Transverse colon (tissue), 4 donors: ENCODE measurements at regions of chr9 and their contacts with region 1.

Region 1: GRCh38 chr9:23784962-23785361 is 41.1 kb downstream of the ELAVL2 start:
- DNase-seq: no peak
- H3K4me3 ChIP-seq: no peak overlapping the region
- H3K27ac ChIP-seq: no peak overlapping the region
- H3K4me1 ChIP-seq: peaks cover 0 to 13% (median 0%) of the 10 kb centered on the region in 4 donors
- H3K27me3 ChIP-seq: no peaks in the 10 kb centered on the region
- CTCF ChIP-seq: no peak
- EP300 ChIP-seq: no peak
- POLR2A ChIP-seq: no peak

Region 2: DNA sequence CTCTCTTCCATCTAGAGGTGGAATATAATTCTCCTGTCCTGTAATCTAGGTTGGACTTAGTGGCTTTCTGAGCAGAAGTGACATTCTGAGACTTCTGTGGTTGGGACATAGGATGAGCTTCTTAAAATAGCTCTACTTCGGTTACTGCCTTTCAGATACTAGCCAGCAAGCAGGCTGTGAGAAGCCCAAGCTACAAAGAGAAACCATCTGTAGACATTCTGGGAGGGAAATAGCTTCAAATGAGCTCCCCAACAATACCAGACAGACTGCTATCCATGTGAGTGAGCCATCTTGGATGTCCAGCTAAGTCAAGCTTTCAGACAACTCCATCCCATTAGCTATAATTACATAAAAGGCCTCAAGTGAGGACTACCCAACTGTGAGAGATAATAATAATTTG is 769.4 kb before region 1 on chr9:
- in situ Hi-C with region 1: no loop called
- intact Hi-C with region 1: no loop called
- DNase-seq: no peak
- H3K4me3 ChIP-seq: no peak overlapping the region
- H3K27ac ChIP-seq: no peak overlapping the region
- H3K4me1 ChIP-seq: no peaks in the 10 kb centered on the region
- H3K27me3 ChIP-seq: no peaks in the 10 kb centered on the region
- CTCF ChIP-seq: no peak
- EP300 ChIP-seq: no peak
- POLR2A ChIP-seq: no peak

Region 3: DNA sequence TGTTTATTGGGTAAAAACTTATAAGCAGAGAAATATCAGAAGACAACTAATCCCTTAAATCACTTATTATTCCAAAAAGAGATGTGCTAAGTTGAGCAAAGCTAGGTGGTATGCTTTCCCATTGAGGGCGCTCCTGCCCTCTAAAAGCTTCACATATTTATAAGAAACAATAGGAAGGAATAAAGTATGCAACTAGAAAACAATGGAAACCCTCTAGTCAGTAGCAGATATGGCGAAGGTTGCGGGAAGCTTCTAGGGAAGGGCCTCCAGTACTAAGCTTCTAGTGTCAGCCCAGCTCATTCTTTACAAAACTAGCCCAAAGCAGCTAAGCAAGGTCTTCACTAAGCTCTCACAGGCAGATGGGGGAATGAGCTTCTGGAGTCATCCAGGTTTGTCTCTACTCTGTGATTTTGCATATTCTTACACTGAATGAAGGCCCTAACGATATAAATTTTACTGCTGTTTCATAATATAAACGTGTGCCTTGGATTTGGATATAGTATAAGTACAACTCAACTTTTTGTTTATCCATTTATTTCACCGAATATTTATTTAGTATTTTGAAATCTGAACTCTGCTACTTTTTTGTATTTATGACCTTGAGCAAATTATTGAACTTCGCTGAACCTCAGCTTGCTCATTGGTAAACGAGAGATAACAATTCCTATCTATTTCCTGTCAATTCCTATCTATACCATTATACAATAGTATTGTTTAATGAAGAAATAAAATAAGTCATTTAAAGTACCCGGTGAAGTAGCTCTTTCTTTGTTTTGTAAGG is 530.4 kb before region 1 on chr9:
- in situ Hi-C with region 1: no loop called
- intact Hi-C with region 1: no loop called
- DNase-seq: no peak
- H3K4me3 ChIP-seq: no peak overlapping the region
- H3K27ac ChIP-seq: no peak overlapping the region
- H3K4me1 ChIP-seq: no peaks in the 10 kb centered on the region
- H3K27me3 ChIP-seq: no peaks in the 10 kb centered on the region
- CTCF ChIP-seq: no peak
- EP300 ChIP-seq: no peak
- POLR2A ChIP-seq: no peak

Region 4: DNA sequence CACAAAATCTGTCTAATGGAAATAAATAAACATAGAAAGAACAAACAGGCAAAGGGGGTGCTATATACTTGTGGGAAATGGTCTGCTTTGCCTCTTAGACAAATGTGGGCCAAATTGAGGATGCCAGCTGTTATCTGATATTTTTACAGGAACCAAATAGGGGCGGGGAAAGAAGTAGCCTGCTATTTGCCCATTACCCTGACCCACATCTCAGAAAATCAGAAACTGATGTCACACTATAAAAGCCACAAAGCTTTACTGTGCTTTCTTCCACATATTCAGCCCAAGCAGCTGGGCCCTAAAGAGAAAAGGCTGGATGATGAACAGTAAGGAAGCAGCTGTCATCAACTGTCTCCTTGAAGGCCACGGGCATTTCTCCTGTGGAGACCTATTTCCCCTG is 56.2 kb before region 1 on chr9:
- in situ Hi-C with region 1: loop called in 1 of 4 experiments (anchors 10 kb)
- intact Hi-C with region 1: no loop called
- DNase-seq: no peak
- H3K4me3 ChIP-seq: no peak overlapping the region
- H3K27ac ChIP-seq: no peak overlapping the region
- H3K4me1 ChIP-seq: no peaks in the 10 kb centered on the region
- H3K27me3 ChIP-seq: no peaks in the 10 kb centered on the region
- CTCF ChIP-seq: no peak
- EP300 ChIP-seq: no peak
- POLR2A ChIP-seq: no peak